Esophagus muscularis mucosa (tissue), 4 donors: ENCODE measurements at regions of chrX and their contacts with region 1.

Region 1: DNA sequence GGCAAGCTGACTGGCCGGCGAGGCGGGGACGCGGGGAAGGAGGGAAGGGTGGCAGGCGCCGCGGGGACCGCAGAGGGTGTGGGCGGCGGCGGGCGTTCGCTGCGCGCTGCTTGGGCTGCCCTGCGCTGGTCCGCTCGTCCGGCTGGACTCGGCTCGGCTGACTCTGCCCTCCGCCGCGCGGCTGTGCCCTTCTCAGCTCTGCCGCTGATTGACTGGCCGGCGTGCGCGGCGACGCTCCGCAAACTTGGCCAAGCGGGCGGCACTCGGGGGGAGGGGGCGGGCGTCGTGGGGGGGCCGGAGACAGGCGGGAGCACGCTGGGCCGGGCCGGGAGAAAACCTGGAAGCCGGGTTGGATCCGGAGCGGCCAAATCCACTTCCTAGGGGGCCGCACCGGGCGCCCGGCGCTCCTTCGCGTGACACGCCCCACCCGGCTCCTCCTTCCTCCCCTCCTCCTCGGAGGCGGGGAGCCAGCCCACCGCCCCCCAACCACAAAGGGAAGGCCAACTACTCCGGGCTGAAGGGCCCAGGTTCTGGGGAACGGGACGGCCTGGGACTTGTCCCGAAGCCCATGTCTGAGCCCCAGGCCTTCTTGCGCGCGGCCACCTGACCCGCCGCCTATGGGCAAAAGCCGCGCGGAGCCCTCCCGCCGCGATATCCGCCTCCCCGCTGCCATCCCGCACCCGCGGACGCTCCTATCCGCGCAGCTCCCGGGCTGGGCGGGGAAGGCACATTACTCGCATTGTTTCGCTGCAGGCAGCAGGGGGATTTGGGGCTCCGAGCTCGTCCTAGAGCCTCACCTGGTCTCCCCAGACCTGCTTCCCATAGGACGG is at the start of gene GPC4:
- DNase-seq: peak; percentile 91
- H3K4me3 ChIP-seq: peak within 1 kb of the TSS; percentile 66 to 83 (median 70)
- H3K27ac ChIP-seq: peak within 1 kb of the TSS; percentile 80 to 90 (median 88)
- H3K4me1 ChIP-seq: peaks cover 0 to 29% (median 16%) of the 10 kb centered on the region in 4 donors
- H3K27me3 ChIP-seq: no peaks in the 10 kb centered on the region
- CTCF ChIP-seq: no peak
- EP300 ChIP-seq: no peak
- POLR2A ChIP-seq: no peak
- total RNA-seq, gene GPC4: 54.3 to 91.2 (median 80.3) TPM

Region 2: GRCh38 chrX:133249266-133250058 is 166.0 kb before region 1 on chrX:
- intact Hi-C with region 1: loop called (anchors 10 kb)
- DNase-seq: no peak
- H3K4me3 ChIP-seq: no peak overlapping the region
- H3K27ac ChIP-seq: peak overlapping the region; percentile 57 to 75 (median 75)
- H3K4me1 ChIP-seq: peaks cover 0 to 32% (median 27%) of the 10 kb centered on the region in 4 donors
- H3K27me3 ChIP-seq: no peaks in the 10 kb centered on the region
- CTCF ChIP-seq: no peak
- EP300 ChIP-seq: no peak
- POLR2A ChIP-seq: no peak

Region 3: GRCh38 chrX:133495464-133496391 is 80.2 kb after region 1 on chrX:
- intact Hi-C with region 1: loop called (anchors 5 kb)
- DNase-seq: no peak
- H3K4me3 ChIP-seq: peak overlapping the region in 2 of 4 donors; percentile 25 to 42
- H3K27ac ChIP-seq: peak overlapping the region; percentile 54 to 84 (median 82)
- H3K4me1 ChIP-seq: peaks cover 5 to 38% (median 25%) of the 10 kb centered on the region in 4 donors
- H3K27me3 ChIP-seq: no peaks in the 10 kb centered on the region
- CTCF ChIP-seq: no peak
- EP300 ChIP-seq: no peak
- POLR2A ChIP-seq: no peak